Panc1 (cell line): ENCODE measurements at regions of chr6 and their contacts with region 1.

Region 1: DNA sequence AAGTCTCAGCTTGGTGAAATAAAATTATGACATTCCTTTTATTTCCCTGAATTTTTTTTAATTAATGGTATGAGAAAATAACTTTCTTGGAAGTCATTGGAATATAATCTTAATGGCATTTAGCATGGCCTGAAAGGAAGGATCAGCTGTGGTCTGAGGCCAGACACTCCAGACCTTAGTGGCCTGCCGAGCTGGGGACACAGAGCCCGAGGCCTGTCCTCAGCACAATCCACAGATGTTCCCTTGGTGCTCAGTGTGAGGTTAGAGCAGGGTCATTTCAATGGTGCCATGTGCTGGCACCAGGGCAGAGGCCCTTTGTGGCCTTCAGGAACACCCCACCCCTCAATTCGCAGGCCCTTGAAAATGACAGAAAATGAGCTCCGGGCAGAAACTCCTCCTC is 120.6 kb downstream of the ADGB start:
- DNase-seq: no peak
- ATAC-seq: no peak
- H3K4me3 ChIP-seq: no peak overlapping the region
- H3K27ac ChIP-seq: no peak overlapping the region
- H3K4me1 ChIP-seq: no peaks in the 10 kb centered on the region
- H3K27me3 ChIP-seq: no peaks in the 10 kb centered on the region
- CTCF ChIP-seq: no peak

Region 2: GRCh38 chr6:146753306-146753705 is 33.9 kb after region 1 on chr6:
- CTCF ChIA-PET with region 1: no interaction called
- POLR2A ChIA-PET with region 1: no interaction called
- in situ Hi-C with region 1: no loop called
- intact Hi-C with region 1: no loop called
- DNase-seq: no peak
- ATAC-seq: no peak
- H3K4me3 ChIP-seq: no peak overlapping the region
- H3K27ac ChIP-seq: no peak overlapping the region
- H3K4me1 ChIP-seq: no peaks in the 10 kb centered on the region
- H3K27me3 ChIP-seq: peaks cover 2% of the 10 kb centered on the region; the same call in 1 of the 2 replicates
- CTCF ChIP-seq: no peak

Region 3: DNA sequence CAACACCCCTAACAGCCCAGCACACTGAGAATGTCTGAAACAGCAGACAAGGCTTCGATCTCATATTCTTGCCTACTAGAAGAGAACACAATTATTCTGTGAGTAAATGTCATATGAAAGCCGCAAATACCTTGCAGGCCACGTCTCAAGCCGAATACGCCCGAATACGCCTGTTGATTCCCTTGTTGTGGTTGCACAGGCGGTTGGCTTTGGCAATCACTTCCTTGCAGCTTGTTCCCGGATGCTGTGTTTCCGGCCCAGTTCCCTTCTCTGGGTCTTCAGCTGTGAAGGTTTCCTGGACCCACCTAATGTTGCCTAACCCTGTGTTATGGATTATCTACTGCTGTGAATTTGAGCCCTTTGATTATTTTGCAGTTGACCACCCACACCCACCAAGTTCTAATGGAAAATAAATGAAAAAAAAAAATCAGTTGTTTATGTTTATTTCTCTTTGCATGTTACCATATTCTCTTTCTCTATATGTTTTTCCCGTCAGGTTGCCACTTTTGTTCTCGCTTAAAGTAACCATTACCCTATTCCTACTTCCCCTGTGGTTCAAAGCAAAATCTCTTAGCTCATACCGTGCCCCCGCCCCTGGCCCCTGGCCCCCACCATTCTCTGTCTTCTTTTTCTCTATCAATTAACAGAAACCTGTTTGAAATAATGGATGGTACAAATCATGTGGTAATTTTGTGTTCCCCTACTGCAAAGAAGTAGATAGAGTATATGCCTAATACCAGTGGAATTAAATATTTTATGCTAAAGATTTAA is 51.8 kb after region 1 on chr6:
- CTCF ChIA-PET with region 1: interaction called, 13 read pairs
- POLR2A ChIA-PET with region 1: no interaction called
- in situ Hi-C with region 1: no loop called
- intact Hi-C with region 1: no loop called
- DNase-seq: no peak
- ATAC-seq: no peak; the same call in 1 of the 2 replicates
- H3K4me3 ChIP-seq: no peak overlapping the region
- H3K27ac ChIP-seq: no peak overlapping the region
- H3K4me1 ChIP-seq: no peaks in the 10 kb centered on the region
- H3K27me3 ChIP-seq: no peaks in the 10 kb centered on the region
- CTCF ChIP-seq: no peak